CD8-positive, alpha-beta T cell (primary cell): ENCODE measurements at regions of chr4 and their contacts with region 1.

Region 1: GRCh38 chr4:180682776-180683175 is 1560.4 kb upstream of the TENM3 start:
- DNase-seq: no peak
- ATAC-seq: no peak
- H3K4me3 ChIP-seq: no peak overlapping the region
- H3K4me3 Mint-ChIP-seq: no peak overlapping the region
- H3K27ac ChIP-seq: no peak overlapping the region
- H3K27ac Mint-ChIP-seq: no peak overlapping the region
- H3K4me1 ChIP-seq: no peaks in the 10 kb centered on the region
- H3K4me1 Mint-ChIP-seq: no peaks in the 10 kb centered on the region
- H3K27me3 ChIP-seq: no peaks in the 10 kb centered on the region
- H3K27me3 Mint-ChIP-seq: no peaks in the 10 kb centered on the region
- CTCF ChIP-seq: no peak

Region 2: DNA sequence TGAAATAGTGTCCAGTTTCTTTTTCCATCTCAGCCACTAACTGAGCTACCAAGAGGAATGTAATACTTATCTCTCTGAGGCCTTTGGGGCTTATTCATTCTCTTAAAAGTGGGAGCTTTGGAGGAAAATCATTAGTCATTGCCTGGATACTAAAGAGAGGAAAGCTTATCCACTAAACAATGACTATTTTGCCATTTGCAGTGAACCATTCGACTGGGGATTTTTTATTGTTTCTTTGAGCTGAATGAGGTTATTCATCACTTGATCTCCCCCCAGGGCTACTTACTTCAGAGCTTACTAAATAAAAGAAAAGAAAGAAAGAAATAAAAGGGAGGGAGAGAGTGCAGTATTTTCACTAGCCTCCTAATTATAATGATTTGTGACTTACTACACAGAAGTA is 231.0 kb after region 1 on chr4:
- CTCF ChIA-PET with region 1: no interaction called
- POLR2A ChIA-PET with region 1: no interaction called
- intact Hi-C with region 1: no loop called
- DNase-seq: no peak
- ATAC-seq: no peak
- H3K4me3 ChIP-seq: no peak overlapping the region
- H3K4me3 Mint-ChIP-seq: no peak overlapping the region
- H3K27ac ChIP-seq: no peak overlapping the region
- H3K27ac Mint-ChIP-seq: no peak overlapping the region
- H3K4me1 ChIP-seq: no peaks in the 10 kb centered on the region
- H3K4me1 Mint-ChIP-seq: no peaks in the 10 kb centered on the region
- H3K27me3 ChIP-seq: no peaks in the 10 kb centered on the region
- H3K27me3 Mint-ChIP-seq: no peaks in the 10 kb centered on the region
- CTCF ChIP-seq: no peak

Region 3: DNA sequence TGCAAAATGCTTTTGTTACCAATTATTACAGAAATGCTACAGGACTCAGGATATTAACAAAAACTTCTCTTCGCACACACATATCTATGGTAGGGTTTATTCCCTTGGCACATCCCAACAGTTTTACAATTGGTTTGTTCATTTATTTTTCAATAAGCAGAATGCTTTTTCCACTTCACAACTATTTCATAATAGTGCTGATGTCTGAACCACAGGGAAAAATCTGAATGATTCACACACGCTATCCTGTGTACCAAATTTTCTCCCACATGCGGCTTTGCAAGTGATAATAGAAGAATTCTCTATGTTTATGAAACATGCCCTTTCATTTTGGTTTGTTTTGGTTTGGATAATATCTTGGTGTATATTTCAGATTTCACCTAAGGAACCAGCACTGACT is 834.7 kb after region 1 on chr4:
- CTCF ChIA-PET with region 1: no interaction called
- POLR2A ChIA-PET with region 1: no interaction called
- intact Hi-C with region 1: loop called in 1 of 2 experiments (anchors 10 kb)
- DNase-seq: no peak
- ATAC-seq: no peak
- H3K4me3 ChIP-seq: no peak overlapping the region
- H3K4me3 Mint-ChIP-seq: no peak overlapping the region
- H3K27ac ChIP-seq: no peak overlapping the region
- H3K27ac Mint-ChIP-seq: no peak overlapping the region
- H3K4me1 ChIP-seq: no peaks in the 10 kb centered on the region
- H3K4me1 Mint-ChIP-seq: no peaks in the 10 kb centered on the region
- H3K27me3 ChIP-seq: no peaks in the 10 kb centered on the region
- H3K27me3 Mint-ChIP-seq: no peaks in the 10 kb centered on the region
- CTCF ChIP-seq: no peak